ENCODE measurements at regions of chr20 and their contacts with region 1.

Region 1: GRCh38 chr20:16801919-16802911 is 54.1 kb downstream of the OTOR start:
- DNase-seq: peak; percentile 79
- H3K4me3 ChIP-seq: no peak overlapping the region
- H3K27ac ChIP-seq: no peak overlapping the region
- H3K4me1 ChIP-seq: peaks cover 28% of the 10 kb centered on the region
- H3K27me3 ChIP-seq: no peaks in the 10 kb centered on the region
- CTCF ChIP-seq: peak; percentile 90

Region 2: DNA sequence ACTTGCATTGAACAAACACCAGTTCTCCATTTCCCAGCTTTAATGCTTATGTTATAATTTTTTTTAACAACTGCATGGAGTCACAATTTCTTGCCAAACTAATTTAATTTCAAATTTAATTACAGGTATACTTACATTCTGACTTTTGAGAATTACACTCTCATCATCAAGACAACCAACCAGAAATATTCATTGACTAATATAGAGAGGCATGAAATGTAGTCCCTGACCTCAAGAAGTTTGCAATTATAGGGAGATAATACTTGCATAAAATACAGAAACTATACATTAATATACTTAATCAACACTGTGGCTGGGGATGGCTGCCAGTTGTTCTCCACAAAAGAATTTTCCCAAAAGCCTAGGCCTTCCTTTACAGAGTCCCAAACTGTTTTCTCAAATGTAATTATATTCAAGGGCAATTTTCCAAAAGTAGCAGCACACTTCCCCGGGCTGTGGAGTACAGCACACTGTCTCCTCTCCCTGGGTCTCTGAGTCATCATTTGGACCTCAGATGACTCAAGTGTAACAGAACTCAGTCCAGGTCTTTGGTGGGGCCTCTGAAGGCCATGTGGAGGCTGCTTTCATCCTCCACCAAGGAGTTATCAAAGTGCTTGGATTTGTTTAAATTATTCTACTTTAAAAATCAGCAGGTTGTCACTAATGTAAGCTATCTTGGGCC is 343.1 kb before region 1 on chr20:
- CTCF ChIA-PET with region 1: no interaction called
- POLR2A ChIA-PET with region 1: no interaction called
- intact Hi-C with region 1: no loop called
- DNase-seq: no peak
- H3K4me3 ChIP-seq: no peak overlapping the region
- H3K27ac ChIP-seq: no peak overlapping the region
- H3K4me1 ChIP-seq: peaks cover 8% of the 10 kb centered on the region
- H3K27me3 ChIP-seq: no peaks in the 10 kb centered on the region
- CTCF ChIP-seq: no peak

Region 3: DNA sequence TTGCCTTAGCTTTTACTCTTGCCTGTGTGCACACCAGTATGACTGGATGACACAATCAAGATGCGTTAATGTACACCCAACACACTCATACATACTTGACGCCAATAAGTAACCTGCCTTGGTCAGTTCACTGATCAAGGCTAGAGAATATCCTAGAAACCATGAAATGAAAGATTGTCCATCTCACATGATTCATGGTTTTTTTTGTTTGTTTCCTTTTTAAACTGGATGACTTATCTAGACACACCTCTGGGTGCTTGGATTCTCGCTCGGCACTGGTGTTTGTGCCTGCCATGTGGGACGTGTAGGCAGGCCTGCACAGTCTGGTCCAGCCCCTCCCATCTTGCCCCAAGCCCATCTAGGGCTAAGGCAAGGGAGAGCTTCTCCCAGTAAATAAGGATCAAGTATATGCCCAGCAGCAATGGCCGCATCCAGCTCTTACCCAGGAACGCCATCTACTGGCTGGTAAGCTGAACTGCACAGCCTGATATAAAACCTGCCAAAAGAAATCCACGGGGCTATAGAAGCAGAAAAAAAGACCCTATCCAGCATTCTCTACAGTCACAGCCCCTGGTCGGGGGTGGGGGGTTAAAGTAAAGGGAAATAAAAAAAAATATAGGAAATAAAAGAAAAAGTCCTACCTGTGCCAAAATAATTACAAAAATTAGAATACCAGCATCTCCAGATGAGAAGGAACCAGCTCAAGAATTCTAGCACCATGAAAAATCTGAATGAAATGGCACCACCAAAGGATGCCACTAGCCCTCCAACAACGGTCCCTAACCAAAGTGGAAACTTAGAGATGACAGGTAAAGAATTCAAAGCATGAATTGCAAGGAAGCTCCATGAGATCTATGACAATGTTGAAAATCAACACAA is 19.2 kb after region 1 on chr20:
- CTCF ChIA-PET with region 1: interaction called, 15 read pairs
- POLR2A ChIA-PET with region 1: no interaction called
- intact Hi-C with region 1: no loop called
- DNase-seq: peak; percentile 74
- H3K4me3 ChIP-seq: no peak overlapping the region
- H3K27ac ChIP-seq: no peak overlapping the region
- H3K4me1 ChIP-seq: no peaks in the 10 kb centered on the region
- H3K27me3 ChIP-seq: no peaks in the 10 kb centered on the region
- CTCF ChIP-seq: peak; percentile 96

Region 4: DNA sequence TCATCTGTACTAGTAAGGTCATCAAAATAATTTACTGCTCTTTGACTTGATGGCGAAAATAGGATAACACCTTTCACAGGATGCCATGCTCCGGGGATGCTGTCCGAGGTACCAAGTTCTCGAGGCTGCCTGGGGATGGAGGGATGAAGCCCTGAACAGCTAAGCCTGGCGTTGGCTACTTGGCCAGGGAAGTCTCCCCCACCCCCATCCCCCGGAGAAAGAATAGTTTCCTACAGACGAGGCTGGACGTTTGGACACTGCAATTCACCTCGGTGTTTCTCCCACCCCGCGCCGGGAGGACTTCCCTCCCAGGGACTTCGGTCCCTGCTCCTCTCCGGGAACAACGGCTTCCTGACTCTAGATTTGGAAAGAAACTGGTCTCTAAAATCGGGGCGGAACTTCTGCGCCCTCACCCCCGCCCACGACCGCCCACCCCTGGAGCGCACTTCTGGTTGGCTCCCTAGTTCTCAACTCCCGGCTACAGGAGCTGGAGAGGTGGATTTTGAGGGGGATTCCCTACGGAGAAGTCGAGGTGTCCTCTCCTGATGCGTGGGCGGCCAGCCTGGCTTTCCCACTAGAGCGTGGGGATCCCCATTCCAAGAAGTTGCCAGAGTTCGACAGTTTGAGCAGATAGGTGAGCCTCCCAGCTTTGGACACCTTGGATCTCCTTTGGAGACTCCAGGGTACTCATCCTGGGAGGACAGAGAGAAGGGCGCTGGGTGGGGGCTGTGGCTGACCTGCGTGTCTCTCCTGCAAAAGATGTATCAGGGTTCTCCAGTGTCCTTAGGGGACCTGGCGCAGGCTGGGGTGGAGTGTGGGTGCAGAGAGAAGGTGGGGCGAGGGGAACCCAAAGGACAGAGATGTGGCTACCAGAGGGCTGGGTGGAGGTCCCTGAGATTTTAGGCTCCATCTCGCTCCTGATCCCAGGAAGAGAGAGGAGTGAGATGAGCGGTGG is 425.7 kb after region 1 on chr20:
- CTCF ChIA-PET with region 1: no interaction called
- POLR2A ChIA-PET with region 1: no interaction called
- intact Hi-C with region 1: loop called (anchors 2 kb)
- DNase-seq: peak; percentile 86
- H3K4me3 ChIP-seq: peak overlapping the region; percentile 78
- H3K27ac ChIP-seq: peak overlapping the region; percentile 79
- H3K4me1 ChIP-seq: peaks cover 29% of the 10 kb centered on the region
- H3K27me3 ChIP-seq: no peaks in the 10 kb centered on the region
- CTCF ChIP-seq: no peak

Region 5: DNA sequence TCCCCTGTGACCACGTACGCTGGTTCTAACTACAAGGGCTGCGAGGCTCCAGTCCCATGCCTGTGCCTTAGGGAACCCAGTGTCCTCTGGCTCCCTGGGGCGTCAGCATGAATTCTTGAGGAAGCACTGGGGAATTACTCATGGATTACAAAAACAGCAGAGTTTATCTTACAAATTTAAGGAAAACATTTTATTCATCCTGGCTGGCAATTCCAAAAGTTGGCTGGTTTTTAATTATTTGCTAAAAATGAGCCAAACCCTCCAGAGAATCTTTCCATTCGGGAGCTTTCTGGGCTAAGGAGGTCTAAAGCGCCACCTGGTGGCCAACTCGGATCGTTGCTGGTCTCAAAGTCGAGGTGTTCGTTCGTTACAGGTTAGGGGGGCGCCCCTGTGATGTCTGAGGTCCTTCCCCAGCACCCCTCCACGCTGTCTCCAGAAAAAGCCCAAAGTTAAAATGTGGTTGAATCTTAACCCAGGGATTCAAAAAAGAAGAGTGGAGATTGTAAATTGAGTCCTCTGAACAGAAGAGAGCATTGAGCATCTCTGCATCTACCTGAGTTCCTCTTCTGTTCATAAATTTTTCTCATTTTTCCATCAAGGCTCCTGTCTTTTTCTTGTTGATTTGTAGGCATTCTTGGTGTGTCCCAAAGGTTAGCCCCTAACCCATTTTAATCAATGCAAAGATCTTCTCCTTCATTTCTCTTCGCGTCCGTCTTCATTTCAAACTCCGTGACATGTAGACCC is 629.6 kb after region 1 on chr20:
- CTCF ChIA-PET with region 1: interaction called, 34 read pairs
- POLR2A ChIA-PET with region 1: no interaction called
- intact Hi-C with region 1: loop called (anchors 1 kb)
- DNase-seq: peak; percentile 81
- H3K4me3 ChIP-seq: no peak overlapping the region
- H3K27ac ChIP-seq: peak overlapping the region; percentile 51
- H3K4me1 ChIP-seq: peaks cover 42% of the 10 kb centered on the region
- H3K27me3 ChIP-seq: no peaks in the 10 kb centered on the region
- CTCF ChIP-seq: peak; percentile 96

Region 6: GRCh38 chr20:17504898-17505635 is 702.9 kb after region 1 on chr20:
- CTCF ChIA-PET with region 1: interaction called, 4 read pairs
- POLR2A ChIA-PET with region 1: interaction called, 3 read pairs
- intact Hi-C with region 1: loop called (anchors 2 kb)
- DNase-seq: peak; percentile 74
- H3K4me3 ChIP-seq: peak overlapping the region; percentile 32
- H3K27ac ChIP-seq: peak overlapping the region; percentile 4
- H3K4me1 ChIP-seq: peaks cover 12% of the 10 kb centered on the region
- H3K27me3 ChIP-seq: no peaks in the 10 kb centered on the region
- CTCF ChIP-seq: peak; percentile 79

Region 7: GRCh38 chr20:17617551-17618223 is 815.5 kb after region 1 on chr20:
- CTCF ChIA-PET with region 1: interaction called, 4 read pairs
- POLR2A ChIA-PET with region 1: no interaction called
- intact Hi-C with region 1: loop called (anchors 2 kb)
- DNase-seq: peak; percentile 57
- H3K4me3 ChIP-seq: no peak overlapping the region
- H3K27ac ChIP-seq: no peak overlapping the region
- H3K4me1 ChIP-seq: peaks cover 11% of the 10 kb centered on the region
- H3K27me3 ChIP-seq: no peaks in the 10 kb centered on the region
- CTCF ChIP-seq: peak; percentile 68

Region 8: DNA sequence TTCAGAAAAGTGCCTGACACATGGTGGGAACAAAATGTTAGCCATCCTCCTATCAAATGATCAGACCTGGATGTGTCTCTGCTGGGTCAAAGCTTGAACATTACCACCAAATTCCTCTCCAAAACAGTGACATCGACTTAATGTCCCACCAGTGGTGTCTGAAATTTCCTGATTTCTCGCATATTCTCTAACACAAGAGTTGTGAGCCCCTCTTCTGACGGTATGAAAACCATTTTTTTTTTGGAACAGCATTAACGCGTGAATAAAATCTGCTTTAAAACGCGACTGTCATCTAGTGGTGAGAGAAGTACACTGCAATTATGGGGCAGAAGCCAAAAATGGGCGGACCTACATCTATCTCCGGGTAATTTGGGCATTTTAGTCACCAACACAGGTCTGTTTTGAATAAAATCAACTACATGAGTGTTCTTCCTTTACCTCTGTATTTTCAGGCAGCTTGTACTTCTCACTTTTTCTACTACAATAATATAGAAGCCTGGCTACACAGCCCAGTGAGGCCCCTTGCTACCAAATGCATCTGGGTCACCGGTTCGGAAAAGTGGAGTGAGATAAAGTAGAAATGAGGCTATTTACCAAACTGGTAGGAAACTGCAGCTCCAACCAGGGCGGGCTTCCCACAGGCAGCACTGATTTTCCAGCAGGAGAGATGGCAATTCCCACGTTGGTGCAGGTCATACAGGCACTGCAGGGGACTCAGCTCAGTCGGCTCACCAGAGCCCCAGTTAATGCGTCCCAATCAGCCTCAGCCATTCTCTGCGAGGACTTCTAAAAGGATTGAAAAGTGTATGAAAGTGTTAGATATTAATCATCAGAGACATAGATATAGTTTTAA is 1194.0 kb after region 1 on chr20:
- CTCF ChIA-PET with region 1: no interaction called
- POLR2A ChIA-PET with region 1: no interaction called
- intact Hi-C with region 1: loop called (anchors 5 kb)
- DNase-seq: peak; percentile 78
- H3K4me3 ChIP-seq: no peak overlapping the region
- H3K27ac ChIP-seq: no peak overlapping the region
- H3K4me1 ChIP-seq: peaks cover 7% of the 10 kb centered on the region
- H3K27me3 ChIP-seq: no peaks in the 10 kb centered on the region
- CTCF ChIP-seq: peak; percentile 91